HepG2 (cell line): ENCODE measurements at regions of chr7 and their contacts with region 1.

Region 1: GRCh38 chr7:49791088-49791741 is 17.8 kb downstream of the VWC2 start:
- DNase-seq: peak; percentile 28
- ATAC-seq: peak; percentile 83
- H3K4me3 ChIP-seq: no peak overlapping the region
- H3K27ac ChIP-seq: no peak overlapping the region
- H3K4me1 ChIP-seq: no peaks in the 10 kb centered on the region
- H3K27me3 ChIP-seq: no peaks in the 10 kb centered on the region
- CTCF ChIP-seq: peak; percentile 64
- EP300 ChIP-seq: no peak
- POLR2A ChIP-seq: no peak
- RAD21 ChIP-seq: no peak

Region 2: DNA sequence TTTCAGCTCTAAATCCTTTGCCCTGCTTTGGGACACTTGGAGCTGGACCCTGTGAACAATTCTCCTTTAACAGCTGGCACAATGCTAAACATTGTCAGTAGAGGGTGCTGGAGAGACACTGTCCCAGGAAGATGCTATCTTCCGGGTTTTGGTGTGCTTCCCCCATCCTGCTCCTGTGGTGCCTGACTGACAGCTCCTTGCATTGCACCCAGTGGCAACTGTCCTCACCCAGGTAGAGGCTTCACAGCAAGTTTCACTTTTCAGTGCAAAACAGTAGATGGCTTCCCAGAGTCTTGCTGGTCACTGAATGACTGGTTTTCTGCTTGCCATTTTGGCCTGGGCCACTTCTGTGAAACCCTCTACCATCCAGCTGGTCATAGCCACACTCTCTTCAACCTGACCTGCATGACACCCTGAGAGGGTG is 789.6 kb before region 1 on chr7:
- CTCF ChIA-PET with region 1: no interaction called
- POLR2A ChIA-PET with region 1: no interaction called
- in situ Hi-C with region 1: no loop called
- intact Hi-C with region 1: loop called (anchors 2 kb)
- DNase-seq: peak; percentile 20
- ATAC-seq: peak; percentile 82
- H3K4me3 ChIP-seq: no peak overlapping the region
- H3K27ac ChIP-seq: no peak overlapping the region
- H3K4me1 ChIP-seq: no peaks in the 10 kb centered on the region
- H3K27me3 ChIP-seq: no peaks in the 10 kb centered on the region
- CTCF ChIP-seq: peak; percentile 73
- EP300 ChIP-seq: no peak
- POLR2A ChIP-seq: no peak
- RAD21 ChIP-seq: no peak

Region 3: DNA sequence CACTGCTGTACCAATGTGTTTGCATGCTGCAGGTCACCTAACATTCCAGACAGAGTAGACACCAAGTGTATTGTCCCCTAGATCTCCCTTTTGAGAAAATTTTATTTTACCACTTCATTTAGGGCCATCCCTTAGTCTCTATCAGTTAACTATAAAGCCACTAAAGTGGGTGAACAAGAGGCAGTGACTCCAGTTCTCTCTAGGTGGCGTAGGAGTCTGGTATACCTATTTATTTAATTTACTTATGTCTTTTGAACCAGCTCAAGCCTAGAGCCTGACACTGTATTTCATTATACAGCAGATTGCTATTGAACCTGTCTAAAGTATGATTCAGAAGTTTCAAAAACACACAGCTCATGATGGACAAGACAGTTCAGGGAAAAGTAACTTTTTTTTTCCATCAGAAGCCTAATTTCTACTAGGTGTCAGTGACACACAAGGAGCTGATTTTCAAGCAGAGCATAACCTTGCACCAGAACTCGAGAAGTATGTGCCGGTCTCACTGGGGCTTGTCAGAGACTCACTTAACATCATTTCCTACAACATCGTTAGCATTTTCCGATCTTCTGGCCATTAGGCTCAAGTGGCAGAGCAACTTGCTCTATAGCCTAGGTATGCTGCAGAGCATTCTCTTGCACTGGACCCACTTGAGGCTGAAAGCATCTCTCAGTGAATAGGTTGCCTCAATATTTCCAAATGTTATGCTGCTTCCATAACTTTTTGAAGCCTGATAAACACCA is 691.5 kb before region 1 on chr7:
- CTCF ChIA-PET with region 1: no interaction called
- POLR2A ChIA-PET with region 1: no interaction called
- in situ Hi-C with region 1: no loop called
- intact Hi-C with region 1: loop called (anchors 5 kb)
- DNase-seq: no peak
- ATAC-seq: no peak; the same call in 2 of the 3 replicates
- H3K4me3 ChIP-seq: no peak overlapping the region
- H3K27ac ChIP-seq: no peak overlapping the region
- H3K4me1 ChIP-seq: no peaks in the 10 kb centered on the region
- H3K27me3 ChIP-seq: no peaks in the 10 kb centered on the region
- CTCF ChIP-seq: no peak
- EP300 ChIP-seq: no peak
- POLR2A ChIP-seq: no peak
- RAD21 ChIP-seq: no peak

Region 4: GRCh38 chr7:49166441-49166840 is 624.8 kb before region 1 on chr7:
- CTCF ChIA-PET with region 1: no interaction called
- POLR2A ChIA-PET with region 1: no interaction called
- in situ Hi-C with region 1: no loop called
- intact Hi-C with region 1: loop called (anchors 2 kb)
- DNase-seq: no peak
- ATAC-seq: no peak
- H3K4me3 ChIP-seq: no peak overlapping the region
- H3K27ac ChIP-seq: no peak overlapping the region
- H3K4me1 ChIP-seq: no peaks in the 10 kb centered on the region
- H3K27me3 ChIP-seq: no peaks in the 10 kb centered on the region
- CTCF ChIP-seq: no peak
- EP300 ChIP-seq: no peak
- POLR2A ChIP-seq: no peak
- RAD21 ChIP-seq: no peak

Region 5: GRCh38 chr7:49483142-49483541 is 308.1 kb before region 1 on chr7:
- CTCF ChIA-PET with region 1: no interaction called
- POLR2A ChIA-PET with region 1: no interaction called
- in situ Hi-C with region 1: no loop called
- intact Hi-C with region 1: loop called (anchors 5 kb)
- DNase-seq: peak; percentile 1
- ATAC-seq: peak; percentile 44; the same call in 2 of the 3 replicates
- H3K4me3 ChIP-seq: no peak overlapping the region
- H3K27ac ChIP-seq: no peak overlapping the region
- H3K4me1 ChIP-seq: no peaks in the 10 kb centered on the region
- H3K27me3 ChIP-seq: no peaks in the 10 kb centered on the region
- CTCF ChIP-seq: no peak
- EP300 ChIP-seq: no peak
- POLR2A ChIP-seq: no peak
- RAD21 ChIP-seq: no peak